ENCODE measurements at regions of chr11 and their contacts with region 1.

Region 1: GRCh38 chr11:10808553-10809372 is at the start of gene EIF4G2:
- DNase-seq: peak; percentile 96 to 100 (median 99)
- H3K4me3 ChIP-seq: peak within 1 kb of the TSS; percentile 68 to 100 (median 94)
- H3K27ac ChIP-seq: peak within 1 kb of the TSS; percentile 92 to 100 (median 99)
- H3K27me3 ChIP-seq: no peaks in the 10 kb centered on the region
- CTCF ChIP-seq: peak in 28 of 56 donors; percentile 12 to 61 (median 27)
- total RNA-seq, gene EIF4G2: 452 to 826 (median 596) TPM

Region 2: GRCh38 chr11:10750838-10751580 is 57.8 kb before region 1 on chr11 and contains the start of gene CTR9:
- intact Hi-C with region 1: loop called (anchors 5 kb)
- DNase-seq: peak; percentile 92 to 97 (median 95)
- H3K4me3 ChIP-seq: peak within 1 kb of the TSS; percentile 63 to 99 (median 89)
- H3K27ac ChIP-seq: peak within 1 kb of the TSS; percentile 80 to 99 (median 97)
- H3K27me3 ChIP-seq: no peaks in the 10 kb centered on the region
- CTCF ChIP-seq: peak in 45 of 56 donors; percentile 20 to 68 (median 39)
- total RNA-seq, gene CTR9: 20.3 to 43.5 (median 27.9) TPM

Region 3: GRCh38 chr11:10857709-10858438 is 49.1 kb after region 1 on chr11 and contains the start of gene ZBED5:
- intact Hi-C with region 1: loop called (anchors 1 kb)
- DNase-seq: peak; percentile 97 to 99 (median 98)
- H3K4me3 ChIP-seq: peak within 1 kb of the TSS; percentile 50 to 98 (median 86)
- H3K27ac ChIP-seq: peak within 1 kb of the TSS; percentile 94 to 100 (median 99)
- H3K27me3 ChIP-seq: no peaks in the 10 kb centered on the region
- CTCF ChIP-seq: peak in 24 of 56 donors; percentile 6 to 41 (median 20)
- total RNA-seq, gene ZBED5: 45.9 to 102 (median 63.1) TPM

Region 4: DNA sequence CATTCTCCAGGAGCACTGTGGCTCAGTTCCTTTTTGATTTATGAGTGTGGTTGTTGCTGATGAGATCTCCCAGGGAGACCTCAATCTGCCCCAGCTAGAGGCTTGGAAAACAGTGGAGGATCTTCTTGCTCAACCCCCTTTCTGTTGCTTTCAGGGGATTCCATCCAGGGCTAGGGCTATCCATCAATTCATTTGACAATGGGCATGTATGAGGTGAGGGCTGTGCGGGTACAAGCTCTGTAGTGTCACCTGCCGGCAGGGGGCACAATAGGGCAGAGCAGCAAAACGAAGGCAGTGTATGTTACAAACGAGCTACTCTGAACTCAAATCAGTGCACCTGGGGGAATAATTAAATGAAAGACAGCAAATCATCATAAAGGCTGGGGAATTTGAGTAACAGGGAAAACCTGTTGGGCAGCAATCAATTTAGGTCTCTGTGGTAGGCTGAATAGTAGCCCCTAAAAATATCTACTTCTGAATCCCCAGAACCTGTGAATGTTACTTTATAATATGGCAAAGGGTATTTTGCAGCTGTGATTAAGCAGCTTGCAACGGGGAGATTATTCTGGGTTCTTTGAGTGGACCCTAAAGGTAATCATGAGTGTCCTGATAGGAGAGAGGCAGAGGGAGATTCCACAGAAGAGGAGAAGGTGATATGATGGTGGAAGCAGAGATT is 219.4 kb after region 1 on chr11:
- intact Hi-C with region 1: loop called in 1 of 2 experiments (anchors 10 kb)
- DNase-seq: peak in 9 of 10 donors; percentile 24 to 71 (median 63)
- H3K4me3 ChIP-seq: no peak overlapping the region
- H3K27ac ChIP-seq: no peak overlapping the region
- H3K27me3 ChIP-seq: no peaks in the 10 kb centered on the region
- CTCF ChIP-seq: peak in 55 of 56 donors; percentile 33 to 75 (median 63)

Measured in dorsolateral prefrontal cortex (tissue), 120 donors.